Heart right ventricle (tissue), 16 donors: ENCODE measurements at regions of chr12 and their contacts with region 1.

Region 1: GRCh38 chr12:12975322-12976077 is 23.5 kb upstream of the GPRC5D start:
- DNase-seq: no peak
- ATAC-seq: peak in 4 of 8 donors; percentile 21 to 54 (median 36)
- H3K4me3 ChIP-seq: no peak overlapping the region
- H3K27ac ChIP-seq: peak overlapping the region in 4 of 10 donors; percentile 6 to 73 (median 28)
- H3K4me1 ChIP-seq: peaks cover 0 to 29% (median 3%) of the 10 kb centered on the region in 9 donors
- H3K27me3 ChIP-seq: no peaks in the 10 kb centered on the region
- CTCF ChIP-seq: peak in 6 of 9 donors; percentile 10 to 50 (median 30)

Region 2: DNA sequence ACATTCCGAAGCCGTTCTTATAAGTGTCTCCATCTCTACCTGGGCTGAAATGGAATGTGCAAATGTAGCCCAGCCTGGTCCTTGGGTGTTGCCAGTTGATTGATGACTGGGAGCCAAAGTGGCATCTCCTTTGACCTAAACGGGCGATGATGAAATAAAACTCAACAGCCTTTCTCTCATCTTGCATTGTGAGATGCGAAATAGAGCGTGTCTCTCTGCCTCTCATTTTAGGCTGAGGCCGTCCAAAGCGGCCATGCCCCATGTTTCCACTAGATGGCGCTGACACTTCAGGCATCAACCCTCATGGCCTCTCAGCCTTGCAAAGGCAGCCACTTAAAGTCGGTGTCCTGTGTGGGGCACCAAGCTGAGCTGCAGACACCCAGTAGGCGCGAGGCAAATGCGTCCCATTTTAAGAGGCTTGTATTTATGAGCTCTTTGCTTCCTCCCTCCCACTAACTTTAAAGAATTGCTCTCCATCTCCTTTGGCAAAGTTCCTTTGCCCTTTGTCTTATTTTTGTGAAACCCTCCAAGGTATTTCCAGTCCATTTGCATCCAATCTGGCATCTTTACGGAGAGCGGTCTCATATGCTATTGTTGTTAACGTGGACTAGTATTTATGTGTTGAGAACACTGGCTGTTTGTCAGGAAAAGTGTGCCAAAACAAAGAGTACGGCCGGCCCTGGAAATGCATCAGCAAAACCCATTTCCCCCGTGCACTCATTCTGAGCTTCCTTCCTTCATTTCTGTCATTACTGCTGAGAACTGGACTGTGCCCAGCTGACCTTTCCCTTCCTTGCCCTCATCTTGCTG is 59.2 kb before region 1 on chr12:
- intact Hi-C with region 1: loop called in 5 of 10 experiments (anchors 2 to 10 kb)
- DNase-seq: peak; percentile 85 to 87
- ATAC-seq: peak; percentile 87 to 97 (median 95)
- H3K4me3 ChIP-seq: peak overlapping the region in 5 of 10 donors; percentile 16 to 32 (median 19)
- H3K27ac ChIP-seq: peak overlapping the region in 8 of 10 donors; percentile 12 to 51 (median 35)
- H3K4me1 ChIP-seq: peaks cover 0 to 19% (median 8%) of the 10 kb centered on the region in 9 donors
- H3K27me3 ChIP-seq: peaks cover 0 to 3% (median 0%) of the 10 kb centered on the region in 7 donors
- CTCF ChIP-seq: peak; percentile 94 to 99 (median 98)

Region 3: GRCh38 chr12:12927211-12928079 is 48.1 kb before region 1 on chr12:
- intact Hi-C with region 1: loop called in 2 of 10 experiments (anchors 5 kb)
- DNase-seq: peak; percentile 53 to 74
- ATAC-seq: peak; percentile 84 to 98 (median 92)
- H3K4me3 ChIP-seq: peak overlapping the region in 7 of 10 donors; percentile 19 to 54 (median 40)
- H3K27ac ChIP-seq: peak overlapping the region in 1 of 10 donors; percentile 56
- H3K4me1 ChIP-seq: peaks cover 0 to 1% (median 0%) of the 10 kb centered on the region in 9 donors
- H3K27me3 ChIP-seq: no peaks in the 10 kb centered on the region
- CTCF ChIP-seq: no peak

Region 4: GRCh38 chr12:12934556-12934955 is 40.9 kb before region 1 on chr12:
- intact Hi-C with region 1: loop called in 2 of 10 experiments (anchors 5 kb)
- DNase-seq: no peak
- ATAC-seq: no peak
- H3K4me3 ChIP-seq: no peak overlapping the region
- H3K27ac ChIP-seq: no peak overlapping the region
- H3K4me1 ChIP-seq: no peaks in the 10 kb centered on the region
- H3K27me3 ChIP-seq: no peaks in the 10 kb centered on the region
- CTCF ChIP-seq: no peak